ENCODE measurements at regions of chr17 and their contacts with region 1.

Region 1: GRCh38 chr17:19753049-19753444 is 4.9 kb upstream of the ALDH3A1 start:
- DNase-seq: peak; percentile 95
- H3K27ac ChIP-seq: peak overlapping the region; percentile 100
- CTCF ChIP-seq: no peak

Region 2: DNA sequence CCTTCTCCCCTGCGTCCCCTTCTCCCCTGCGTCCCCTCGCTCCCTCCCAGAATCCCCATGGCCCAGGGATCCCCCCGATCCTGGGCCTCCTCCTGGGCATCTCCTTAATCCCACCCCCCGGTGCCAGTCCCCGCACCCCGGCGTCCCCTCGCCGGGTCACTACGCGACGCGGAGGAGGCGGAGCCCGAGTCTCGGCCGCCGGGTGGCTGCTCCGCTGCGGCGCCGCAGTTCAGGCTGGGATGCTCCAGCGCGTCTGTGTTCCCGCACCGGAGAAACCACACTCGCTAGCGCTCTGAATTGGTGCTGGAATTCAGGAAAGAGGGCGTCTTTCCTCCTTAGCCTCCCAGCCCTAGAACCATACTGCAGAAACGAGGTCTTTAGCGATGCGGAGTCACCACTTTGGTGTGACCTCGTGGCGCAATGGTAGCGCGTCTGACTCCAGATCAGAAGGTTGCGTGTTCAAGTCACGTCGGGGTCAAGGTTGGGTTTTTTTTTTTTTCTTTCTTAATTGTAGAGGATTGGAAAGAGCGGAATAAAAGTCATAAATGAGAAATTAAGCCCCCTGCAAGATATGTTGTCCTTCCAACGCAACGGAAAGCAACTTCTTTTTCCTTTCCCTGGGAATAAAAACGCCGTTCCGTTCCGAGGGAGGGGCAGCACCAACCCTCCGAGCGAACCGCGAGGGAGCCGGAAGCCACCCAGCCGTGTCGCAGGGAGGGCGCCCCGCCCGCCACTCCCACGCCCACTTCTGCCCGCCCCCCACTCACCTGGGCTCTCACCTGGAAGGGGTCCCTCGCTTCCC is 245.1 kb before region 1 on chr17:
- CTCF ChIA-PET with region 1: no interaction called
- POLR2A ChIA-PET with region 1: interaction called, 11 read pairs
- DNase-seq: peak; percentile 89
- H3K27ac ChIP-seq: peak overlapping the region; percentile 95
- CTCF ChIP-seq: no peak

Region 3: GRCh38 chr17:19664136-19664820 is 88.8 kb before region 1 on chr17:
- CTCF ChIA-PET with region 1: no interaction called
- POLR2A ChIA-PET with region 1: no interaction called
- DNase-seq: no peak
- H3K27ac ChIP-seq: peak overlapping the region; percentile 25; the same call in 1 of the 2 replicates
- CTCF ChIP-seq: no peak

Region 4: DNA sequence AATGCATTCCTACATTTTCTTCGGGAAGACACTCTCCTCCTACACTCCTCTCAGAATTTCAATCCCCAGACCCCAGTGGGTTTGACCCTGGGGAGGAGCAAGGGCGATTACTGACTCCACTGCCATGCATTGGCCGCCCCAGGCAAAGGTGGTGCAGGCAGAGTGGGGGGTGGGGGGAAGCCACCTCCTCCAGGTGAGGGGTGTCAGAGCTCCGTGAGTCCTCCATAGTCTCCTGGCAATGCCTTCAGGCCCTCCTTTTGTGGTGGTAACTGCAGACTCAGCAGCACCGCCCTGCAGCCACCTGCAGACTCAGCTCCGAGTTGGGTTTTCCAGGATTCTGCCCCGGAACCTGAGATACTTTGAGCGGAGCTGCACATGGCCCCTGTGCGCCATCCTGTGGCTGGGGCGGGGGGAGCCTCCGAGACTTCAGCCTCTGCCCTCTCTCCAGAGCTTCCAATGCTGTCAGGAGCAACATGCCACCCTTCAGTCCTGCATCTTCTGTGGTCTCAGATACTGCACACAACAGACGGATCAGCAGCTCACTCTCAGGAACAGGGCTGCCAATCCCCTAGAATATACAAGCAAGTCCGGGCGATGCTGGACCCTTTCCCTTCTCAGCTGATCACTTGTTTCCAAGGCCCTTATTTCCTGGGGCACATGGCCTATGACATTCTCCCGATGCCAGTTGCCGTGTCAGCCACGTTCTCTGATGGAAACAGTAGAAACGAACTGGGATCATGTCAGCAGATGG is 34.3 kb before region 1 on chr17:
- CTCF ChIA-PET with region 1: interaction called, 16 read pairs
- POLR2A ChIA-PET with region 1: interaction called, 5 read pairs
- DNase-seq: no peak
- H3K27ac ChIP-seq: peak overlapping the region; percentile 98
- CTCF ChIP-seq: no peak

Measured in RWPE1 (cell line).